Vagina (tissue), 2 donors: ENCODE measurements at regions of chr14 and their contacts with region 1.

Region 1: GRCh38 chr14:22653012-22653621 is 9.0 kb upstream of the OR6J1 start:
- DNase-seq: peak in 1 of 2 donors; percentile 77
- H3K4me3 ChIP-seq: no peak overlapping the region
- H3K27ac ChIP-seq: no peak overlapping the region
- H3K4me1 ChIP-seq: no peaks in the 10 kb centered on the region
- H3K27me3 ChIP-seq: no peaks in the 10 kb centered on the region
- CTCF ChIP-seq: peak; percentile 43 to 75 (median 59)
- POLR2A ChIP-seq: no peak

Region 2: GRCh38 chr14:22386924-22387775 is 266.0 kb before region 1 on chr14:
- intact Hi-C with region 1: loop called (anchors 5 kb)
- DNase-seq: peak in 1 of 2 donors; percentile 69
- H3K4me3 ChIP-seq: no peak overlapping the region
- H3K27ac ChIP-seq: no peak overlapping the region
- H3K4me1 ChIP-seq: no peaks in the 10 kb centered on the region
- H3K27me3 ChIP-seq: no peaks in the 10 kb centered on the region
- CTCF ChIP-seq: peak; percentile 54 to 87 (median 71)
- POLR2A ChIP-seq: no peak

Region 3: GRCh38 chr14:22570132-22570949 is 82.8 kb before region 1 on chr14:
- intact Hi-C with region 1: loop called (anchors 10 kb)
- DNase-seq: no peak
- H3K4me3 ChIP-seq: no peak overlapping the region
- H3K27ac ChIP-seq: peak overlapping the region; percentile 47
- H3K4me1 ChIP-seq: peaks cover 32% of the 10 kb centered on the region
- H3K27me3 ChIP-seq: no peaks in the 10 kb centered on the region
- CTCF ChIP-seq: peak; percentile 46 to 97 (median 96)
- POLR2A ChIP-seq: no peak

Region 4: GRCh38 chr14:22769369-22769768 is 116.3 kb after region 1 on chr14:
- intact Hi-C with region 1: no loop called
- DNase-seq: no peak
- H3K4me3 ChIP-seq: no peak overlapping the region
- H3K27ac ChIP-seq: no peak overlapping the region
- H3K4me1 ChIP-seq: peaks cover 26% of the 10 kb centered on the region
- H3K27me3 ChIP-seq: no peaks in the 10 kb centered on the region
- CTCF ChIP-seq: no peak
- POLR2A ChIP-seq: no peak

Region 5: DNA sequence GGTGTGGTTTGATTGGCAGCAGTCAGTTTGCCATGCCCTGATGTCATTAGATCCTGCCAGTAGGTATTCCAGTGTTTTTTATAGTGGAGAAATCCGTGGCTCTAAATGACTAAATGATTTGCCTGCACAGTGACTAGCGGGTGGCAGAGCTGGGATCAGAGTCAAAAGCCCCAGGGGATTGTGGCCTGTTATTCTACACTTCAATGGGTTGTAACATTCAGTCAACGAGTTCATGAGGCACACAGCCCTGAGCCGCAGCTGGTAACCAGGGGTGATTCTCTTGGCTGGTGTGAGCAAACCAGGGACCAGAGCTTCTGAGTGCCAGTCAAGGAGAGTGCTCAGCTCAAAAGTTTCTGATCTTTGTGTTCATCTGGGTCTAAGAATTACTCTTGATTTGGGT is 753.1 kb after region 1 on chr14:
- intact Hi-C with region 1: loop called (anchors 5 kb)
- DNase-seq: no peak
- H3K4me3 ChIP-seq: no peak overlapping the region
- H3K27ac ChIP-seq: no peak overlapping the region
- H3K4me1 ChIP-seq: no peaks in the 10 kb centered on the region
- H3K27me3 ChIP-seq: no peaks in the 10 kb centered on the region
- CTCF ChIP-seq: no peak
- POLR2A ChIP-seq: no peak

Region 6: DNA sequence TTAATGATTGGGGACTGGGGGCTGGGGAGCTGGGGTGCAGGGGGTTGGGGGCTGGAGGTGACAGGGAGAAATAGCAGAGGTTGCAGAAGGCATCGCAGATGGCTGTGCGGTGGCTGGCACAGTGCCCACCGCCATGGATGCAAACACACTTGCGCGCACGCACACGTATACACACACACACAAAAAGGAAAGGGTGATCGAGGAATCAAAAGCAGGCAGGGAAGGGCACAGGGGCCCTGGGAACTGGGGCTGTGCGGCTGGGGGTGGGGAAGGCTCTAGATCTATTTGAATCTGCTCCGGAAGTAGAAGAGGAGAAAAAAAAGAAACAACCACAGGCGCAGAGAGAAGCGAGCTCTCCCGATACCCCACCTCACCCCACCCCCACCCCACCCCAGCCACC is 859.0 kb after region 1 on chr14:
- intact Hi-C with region 1: no loop called
- DNase-seq: no peak
- H3K4me3 ChIP-seq: peak overlapping the region in 1 of 2 donors; percentile 9
- H3K27ac ChIP-seq: no peak overlapping the region
- H3K4me1 ChIP-seq: no peaks in the 10 kb centered on the region
- H3K27me3 ChIP-seq: no peaks in the 10 kb centered on the region
- CTCF ChIP-seq: no peak
- POLR2A ChIP-seq: no peak